H1 (cell line): ENCODE measurements at regions of chr17 and their contacts with region 1.

Region 1: DNA sequence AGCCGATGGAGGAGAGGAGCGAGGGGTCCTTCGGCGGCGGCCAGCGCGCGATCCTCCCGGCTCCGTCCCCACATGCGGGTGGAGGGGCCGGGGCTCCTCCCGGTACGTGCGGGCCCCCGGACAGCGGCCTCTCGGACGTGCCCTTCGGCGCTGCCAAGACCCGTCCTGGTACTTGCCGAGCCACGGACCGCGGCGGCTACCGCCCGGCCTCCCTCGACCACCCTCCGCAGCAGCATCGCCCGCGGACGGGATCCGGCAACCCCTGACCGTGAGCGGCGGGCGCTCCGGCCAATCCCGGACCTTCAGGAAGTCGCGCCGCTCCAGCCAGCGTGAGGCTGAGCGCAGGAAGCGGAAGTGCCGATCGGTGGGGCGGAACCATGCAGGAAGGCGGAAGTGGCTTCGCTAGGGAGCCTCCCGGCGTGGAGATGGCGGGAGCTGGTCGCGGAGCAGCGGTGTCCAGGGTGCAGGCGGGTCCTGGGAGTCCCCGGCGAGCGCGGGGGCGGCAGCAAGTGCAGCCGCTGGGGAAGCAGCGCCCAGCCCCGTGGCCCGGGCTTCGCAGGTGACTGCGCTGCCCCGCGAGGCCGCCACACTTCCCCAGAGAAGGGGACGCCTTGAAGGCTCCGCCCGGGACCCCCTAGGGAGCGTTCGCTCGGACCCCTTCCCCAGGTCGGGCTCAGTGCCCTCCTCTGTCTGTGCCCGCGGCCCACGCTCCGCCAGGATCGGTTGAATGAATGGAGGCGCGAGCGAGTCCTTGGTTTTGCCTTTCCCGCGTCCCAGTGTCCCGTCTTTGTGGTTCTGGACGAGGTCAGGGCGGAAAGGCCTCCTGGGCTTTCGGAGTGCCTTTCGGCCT is at the starts of genes CCDC137 and OXLD1:
- DNase-seq: peak; percentile 88 to 93
- H3K4me3 ChIP-seq: peak within 1 kb of the TSS; percentile 62 to 95 (median 88)
- H3K27ac ChIP-seq: peak within 1 kb of the TSS; percentile 74
- H3K4me1 ChIP-seq: peaks cover 3 to 11% (median 8%) of the 10 kb centered on the region in 4 experiments
- H3K27me3 ChIP-seq: no peaks in the 10 kb centered on the region
- CTCF ChIP-seq: no peak
- EP300 ChIP-seq: no peak
- POLR2A ChIP-seq: peak; percentile 94 to 96
- RAD21 ChIP-seq: no peak
- total RNA-seq, gene CCDC137: 38.6 and 39.8 TPM in 2 replicates
- total RNA-seq, gene OXLD1: 35.9 and 41.5 TPM in 2 replicates

Region 2: GRCh38 chr17:81651692-81652091 is 14.9 kb before region 1 on chr17:
- CTCF ChIA-PET with region 1: interaction called, 9 read pairs
- POLR2A ChIA-PET with region 1: interaction called, 23 read pairs
- DNase-seq: no peak
- H3K4me3 ChIP-seq: no peak overlapping the region
- H3K27ac ChIP-seq: no peak overlapping the region
- H3K4me1 ChIP-seq: peaks cover 0 to 24% (median 8%) of the 10 kb centered on the region in 4 experiments; a peak in 6 of 7 replicates
- H3K27me3 ChIP-seq: peaks cover 2 to 15% (median 9%) of the 10 kb centered on the region in 4 experiments; a peak in 5 of 7 replicates
- CTCF ChIP-seq: no peak
- EP300 ChIP-seq: no peak
- POLR2A ChIP-seq: no peak
- RAD21 ChIP-seq: no peak

Region 3: DNA sequence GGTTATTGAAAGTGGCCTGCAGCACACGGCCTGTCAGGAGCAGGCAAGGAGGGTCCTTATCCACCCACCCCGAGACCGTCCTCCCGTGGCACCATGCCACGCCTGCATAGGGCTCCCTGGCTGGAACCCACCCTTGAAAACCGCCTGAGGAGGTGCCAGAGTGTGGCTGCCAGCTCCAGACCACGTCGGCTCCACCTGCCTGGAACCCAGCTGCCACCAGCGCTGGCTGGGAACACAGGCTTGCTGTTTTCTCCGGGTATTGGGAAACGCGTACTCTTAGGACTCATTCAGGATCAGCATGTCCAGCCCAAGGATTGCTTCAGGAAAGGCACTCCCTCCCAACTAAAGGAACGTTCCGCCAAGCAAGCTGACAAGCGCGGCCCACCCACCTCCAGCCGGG is 10.3 kb after region 1 on chr17:
- CTCF ChIA-PET with region 1: interaction called, 10 read pairs
- POLR2A ChIA-PET with region 1: interaction called, 14 read pairs
- DNase-seq: no peak
- H3K4me3 ChIP-seq: no peak overlapping the region
- H3K27ac ChIP-seq: no peak overlapping the region
- H3K4me1 ChIP-seq: no peaks in the 10 kb centered on the region
- H3K27me3 ChIP-seq: no peaks in the 10 kb centered on the region; a peak in 1 of 7 replicates
- CTCF ChIP-seq: no peak
- EP300 ChIP-seq: no peak
- POLR2A ChIP-seq: peak in 1 of 2 experiments; percentile 23; a peak in 2 of 3 replicates
- RAD21 ChIP-seq: no peak

Region 4: GRCh38 chr17:81683584-81684237 is 17.1 kb after region 1 on chr17 and contains the starts of genes ARL16 and HGS:
- CTCF ChIA-PET with region 1: interaction called, 10 read pairs
- POLR2A ChIA-PET with region 1: interaction called, 65 read pairs
- DNase-seq: peak; percentile 97 to 98
- H3K4me3 ChIP-seq: peak within 1 kb of the TSS; percentile 76 to 89 (median 87)
- H3K27ac ChIP-seq: peak within 1 kb of the TSS; percentile 58
- H3K4me1 ChIP-seq: peaks cover 3 to 14% (median 7%) of the 10 kb centered on the region in 4 experiments; a peak in 6 of 7 replicates
- H3K27me3 ChIP-seq: no peaks in the 10 kb centered on the region; a peak in 1 of 7 replicates
- CTCF ChIP-seq: no peak
- EP300 ChIP-seq: no peak
- POLR2A ChIP-seq: no peak; a peak in 1 of 3 replicates
- RAD21 ChIP-seq: no peak
- total RNA-seq, gene ARL16: 37.0 and 41.8 TPM in 2 replicates
- total RNA-seq, gene HGS: 78.8 and 80.8 TPM in 2 replicates

Region 5: GRCh38 chr17:81702971-81703746 is 36.6 kb after region 1 on chr17 and contains the start of gene MRPL12:
- CTCF ChIA-PET with region 1: interaction called, 7 read pairs
- POLR2A ChIA-PET with region 1: interaction called, 13 read pairs
- DNase-seq: peak; percentile 72 to 92
- H3K4me3 ChIP-seq: peak within 1 kb of the TSS; percentile 76 to 96 (median 95)
- H3K27ac ChIP-seq: peak within 1 kb of the TSS; percentile 92
- H3K4me1 ChIP-seq: peaks cover 0 to 14% (median 10%) of the 10 kb centered on the region in 4 experiments; a peak in 5 of 7 replicates
- H3K27me3 ChIP-seq: no peaks in the 10 kb centered on the region
- CTCF ChIP-seq: peak in 1 of 3 experiments; percentile 18; a peak in 1 of 4 replicates
- EP300 ChIP-seq: no peak
- POLR2A ChIP-seq: peak; percentile 83 to 99
- RAD21 ChIP-seq: no peak
- total RNA-seq, gene MRPL12: 120 and 131 TPM in 2 replicates